ENCODE measurements at regions of chr3 and their contacts with region 1.

Region 1: GRCh38 chr3:124347418-124347817 is 355.5 kb upstream of the ROPN1 start:
- DNase-seq: no peak
- CTCF ChIP-seq: no peak

Region 2: GRCh38 chr3:123971406-123971805 is 376.0 kb before region 1 on chr3:
- in situ Hi-C with region 1: no loop called
- DNase-seq: no peak
- CTCF ChIP-seq: no peak

Region 3: GRCh38 chr3:124467980-124468902 is 120.8 kb after region 1 on chr3:
- in situ Hi-C with region 1: loop called (anchors 10 kb)
- DNase-seq: peak; percentile 62
- CTCF ChIP-seq: peak; percentile 83

Region 4: GRCh38 chr3:124492811-124493210 is 145.4 kb after region 1 on chr3:
- in situ Hi-C with region 1: no loop called
- DNase-seq: peak; percentile 27
- CTCF ChIP-seq: no peak

Region 5: DNA sequence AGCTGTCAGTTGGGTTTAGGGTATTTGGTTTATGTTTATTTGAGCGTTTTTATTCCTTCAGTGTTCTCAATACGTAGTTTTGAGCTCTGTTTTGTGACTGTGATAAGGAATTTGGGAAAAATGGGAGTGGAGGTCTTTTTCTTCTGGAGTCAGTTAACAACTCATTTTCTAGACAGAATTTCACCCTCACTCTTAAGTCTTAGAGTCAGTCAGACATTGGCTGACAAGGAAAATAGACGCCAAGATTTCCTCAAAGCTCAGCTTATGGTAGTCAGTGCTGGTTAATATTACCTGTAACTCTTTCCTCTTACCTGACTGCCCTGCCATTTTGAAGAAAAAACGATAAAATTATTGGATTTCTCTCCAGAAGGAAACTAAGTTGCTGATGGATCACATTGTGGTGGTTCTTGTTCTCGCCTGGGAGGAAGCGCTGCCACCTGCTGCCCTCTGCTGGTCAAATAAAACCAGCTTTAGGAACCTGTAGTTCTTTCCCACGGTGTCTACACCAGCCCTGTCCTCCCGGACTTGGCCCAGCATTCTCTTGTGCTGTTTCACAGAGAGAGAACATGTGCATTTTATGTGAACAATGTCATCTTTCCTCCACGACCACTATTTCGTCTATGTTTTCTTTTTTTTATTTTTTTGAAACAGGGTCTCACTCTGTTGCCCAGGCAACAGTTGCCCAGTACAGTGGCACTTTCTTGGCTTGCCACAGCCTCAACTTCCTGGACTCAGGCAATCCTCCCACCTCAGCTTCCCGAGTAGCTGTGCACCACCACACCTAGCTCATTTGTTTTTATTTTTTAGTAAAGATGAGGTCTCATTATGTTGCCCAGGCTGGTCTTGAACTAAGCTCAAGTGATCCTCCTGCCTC is 341.4 kb after region 1 on chr3:
- in situ Hi-C with region 1: loop called (anchors 25 kb)
- DNase-seq: peak; percentile 79
- CTCF ChIP-seq: peak; percentile 80

Measured in GM13976 (cell line).